Activated CD8-positive, alpha-beta memory T cell treated with anti-CD3 and anti-CD28 coated beads, Interleukin-2, amount 10 ng/mL, durations not matched to agents 7 days and 5 days (primary cell): ENCODE measurements at regions of chr2 and their contacts with region 1.

Region 1: GRCh38 chr2:118003396-118003824 is 10.5 kb downstream of the CCDC93 start:
- DNase-seq: peak; percentile 60
- ATAC-seq: peak; percentile 94
- H3K4me3 Mint-ChIP-seq: no peak overlapping the region
- H3K27ac Mint-ChIP-seq: no peak overlapping the region
- H3K4me1 Mint-ChIP-seq: peaks cover 11% of the 10 kb centered on the region
- H3K27me3 Mint-ChIP-seq: no peaks in the 10 kb centered on the region

Region 2: GRCh38 chr2:117814417-117815264 is 188.8 kb before region 1 on chr2 and contains the start of gene DDX18:
- CTCF ChIA-PET with region 1: interaction called, 72 read pairs
- DNase-seq: peak; percentile 98
- ATAC-seq: peak; percentile 94
- H3K4me3 Mint-ChIP-seq: peak within 1 kb of the TSS; percentile 98
- H3K27ac Mint-ChIP-seq: peak within 1 kb of the TSS; percentile 96
- H3K4me1 Mint-ChIP-seq: peaks cover 33% of the 10 kb centered on the region
- H3K27me3 Mint-ChIP-seq: no peaks in the 10 kb centered on the region
- total RNA-seq, gene DDX18: 55.3 to 78.2 TPM

Region 3: GRCh38 chr2:117820444-117820843 is 183.0 kb before region 1 on chr2:
- CTCF ChIA-PET with region 1: interaction called, 72 read pairs
- DNase-seq: no peak
- ATAC-seq: peak; percentile 33
- H3K4me3 Mint-ChIP-seq: no peak overlapping the region
- H3K27ac Mint-ChIP-seq: no peak overlapping the region
- H3K4me1 Mint-ChIP-seq: peaks cover 26% of the 10 kb centered on the region
- H3K27me3 Mint-ChIP-seq: no peaks in the 10 kb centered on the region

Region 4: GRCh38 chr2:117989854-117990438 is 13.5 kb before region 1 on chr2:
- CTCF ChIA-PET with region 1: interaction called, 37 read pairs
- DNase-seq: no peak
- ATAC-seq: no peak
- H3K4me3 Mint-ChIP-seq: no peak overlapping the region
- H3K27ac Mint-ChIP-seq: no peak overlapping the region
- H3K4me1 Mint-ChIP-seq: peaks cover 2% of the 10 kb centered on the region
- H3K27me3 Mint-ChIP-seq: no peaks in the 10 kb centered on the region

Region 5: GRCh38 chr2:118013724-118014491 is 10.5 kb after region 1 on chr2 and contains the start of gene CCDC93:
- CTCF ChIA-PET with region 1: interaction called, 52 read pairs
- DNase-seq: peak; percentile 88
- ATAC-seq: peak; percentile 88
- H3K4me3 Mint-ChIP-seq: peak within 1 kb of the TSS; percentile 87
- H3K27ac Mint-ChIP-seq: peak within 1 kb of the TSS; percentile 87
- H3K4me1 Mint-ChIP-seq: peaks cover 39% of the 10 kb centered on the region
- H3K27me3 Mint-ChIP-seq: no peaks in the 10 kb centered on the region
- total RNA-seq, gene CCDC93: 36.9 to 42.0 TPM

Region 6: GRCh38 chr2:118088051-118089024 is 84.9 kb after region 1 on chr2 and contains the start of gene INSIG2:
- CTCF ChIA-PET with region 1: interaction called, 12 read pairs
- DNase-seq: peak; percentile 97
- ATAC-seq: peak; percentile 95
- H3K4me3 Mint-ChIP-seq: peak within 1 kb of the TSS; percentile 93
- H3K27ac Mint-ChIP-seq: peak within 1 kb of the TSS; percentile 89
- H3K4me1 Mint-ChIP-seq: peaks cover 21% of the 10 kb centered on the region
- H3K27me3 Mint-ChIP-seq: peaks cover 10% of the 10 kb centered on the region
- total RNA-seq, gene INSIG2: 21.7 to 22.2 TPM